ENCODE measurements at regions of chr4 and their contacts with region 1.

Region 1: DNA sequence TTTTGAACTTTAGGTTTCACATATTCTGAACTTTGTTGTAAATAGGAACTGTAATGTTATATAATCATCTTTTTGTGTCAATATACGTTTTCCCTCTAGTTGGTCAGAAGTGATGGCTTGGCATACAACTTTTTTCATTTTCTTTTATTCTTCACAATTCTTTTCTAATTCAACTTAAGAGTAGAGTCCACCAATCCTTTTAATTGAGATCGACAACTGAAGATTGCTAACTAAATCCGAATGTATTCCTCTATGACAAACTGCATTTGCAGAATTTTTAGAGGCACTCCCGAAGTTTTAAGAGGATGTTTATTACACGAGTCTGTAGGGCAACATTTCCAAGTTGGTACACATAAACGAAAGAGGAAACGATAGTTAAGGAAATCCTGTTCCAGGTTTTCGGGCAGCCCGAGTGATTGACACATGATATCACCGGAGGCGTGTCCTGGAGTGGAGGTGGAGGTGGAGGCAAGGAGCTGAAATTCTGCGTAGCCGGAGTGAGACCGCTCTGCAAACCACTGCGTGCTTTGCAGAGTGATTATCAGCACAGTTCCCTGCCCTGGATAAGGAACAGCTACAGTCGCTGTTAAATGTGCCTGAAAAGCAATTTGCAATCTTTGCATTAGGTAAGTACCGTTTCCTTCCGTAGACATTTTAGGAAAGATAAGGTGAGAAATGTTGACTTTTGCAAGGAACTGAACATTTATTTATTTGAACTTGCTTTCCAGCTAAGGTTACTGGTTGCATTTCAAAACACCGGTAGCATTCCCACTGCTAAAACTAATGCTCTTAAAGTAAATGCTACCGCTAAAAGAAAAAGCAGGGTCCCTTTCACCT is at the start of gene SPRY1:
- DNase-seq: peak; percentile 84 to 93 (median 92)
- ATAC-seq: peak; percentile 86 to 92 (median 90)
- H3K4me3 ChIP-seq: peak within 1 kb of the TSS; percentile 63 to 86 (median 73)
- H3K27ac ChIP-seq: peak within 1 kb of the TSS; percentile 85 to 97 (median 93)
- H3K4me1 ChIP-seq: peaks cover 0 to 29% (median 0%) of the 10 kb centered on the region in 12 donors
- H3K27me3 ChIP-seq: peaks cover 0 to 8% (median 0%) of the 10 kb centered on the region in 9 donors
- CTCF ChIP-seq: no peak
- POLR2A ChIP-seq: peak; percentile 41 to 96
- total RNA-seq, gene SPRY1: 28.0 to 104 (median 39.1) TPM

Region 2: GRCh38 chr4:123121241-123121907 is 275.2 kb before region 1 on chr4:
- intact Hi-C with region 1: loop called in 7 of 10 experiments (anchors 5 to 10 kb)
- DNase-seq: no peak
- ATAC-seq: no peak
- H3K4me3 ChIP-seq: no peak overlapping the region
- H3K27ac ChIP-seq: no peak overlapping the region
- H3K4me1 ChIP-seq: peaks cover 0 to 5% (median 0%) of the 10 kb centered on the region in 12 donors
- H3K27me3 ChIP-seq: no peaks in the 10 kb centered on the region
- CTCF ChIP-seq: no peak
- POLR2A ChIP-seq: no peak

Region 3: DNA sequence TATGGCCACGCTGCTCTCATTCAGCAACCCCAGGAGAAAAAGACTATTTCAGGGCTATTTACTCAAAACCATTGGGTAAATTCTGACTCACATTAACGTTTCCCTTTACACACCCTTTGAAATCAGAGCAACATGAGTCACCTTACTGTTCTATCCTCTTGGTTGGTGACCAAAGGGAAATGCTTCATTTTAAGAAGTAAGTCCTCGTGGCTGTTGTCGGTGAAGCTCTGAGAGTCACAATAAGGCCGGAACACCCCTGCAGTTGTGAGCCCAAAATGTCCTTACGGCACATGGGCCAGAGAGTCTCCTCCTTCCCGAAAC is 56.2 kb before region 1 on chr4:
- intact Hi-C with region 1: loop called in 1 of 10 experiments (anchors 5 kb)
- DNase-seq: peak in 2 of 5 donors; percentile 35 to 47
- ATAC-seq: peak; percentile 65 to 88 (median 87)
- H3K4me3 ChIP-seq: no peak overlapping the region
- H3K27ac ChIP-seq: peak overlapping the region; percentile 57 to 83 (median 77)
- H3K4me1 ChIP-seq: peaks cover 0 to 43% (median 13%) of the 10 kb centered on the region in 12 donors
- H3K27me3 ChIP-seq: no peaks in the 10 kb centered on the region
- CTCF ChIP-seq: no peak
- POLR2A ChIP-seq: peak in 1 of 2 donors; percentile 38

Region 4: DNA sequence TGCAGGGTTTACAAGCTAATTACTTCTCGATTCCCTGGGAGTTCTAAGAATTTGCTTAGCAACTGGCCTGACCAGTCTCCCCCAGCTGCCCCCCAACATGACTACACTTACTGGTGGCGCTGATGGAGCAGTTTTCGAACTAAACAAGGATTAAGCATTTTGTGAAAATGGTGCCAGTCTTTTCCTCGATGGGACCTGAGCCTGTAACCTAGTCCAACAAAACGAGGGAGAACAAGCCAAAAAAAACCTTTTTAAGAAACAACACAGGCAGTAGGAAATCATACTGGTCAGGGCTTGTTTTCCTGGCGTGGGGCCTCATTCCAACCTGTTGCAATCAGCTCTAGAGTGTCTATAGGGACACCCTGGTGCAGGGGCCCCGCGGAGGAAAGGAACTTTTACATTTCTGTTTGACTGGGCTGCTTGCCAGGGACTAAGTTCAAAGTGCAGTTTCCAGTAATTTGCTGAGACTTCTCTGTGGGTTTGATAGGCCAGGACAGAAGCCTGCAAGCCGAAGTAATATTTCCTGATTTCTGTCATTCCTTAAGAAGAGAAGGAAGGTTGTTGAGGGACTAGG is 158.8 kb after region 1 on chr4:
- intact Hi-C with region 1: loop called in 5 of 10 experiments (anchors 5 to 10 kb)
- DNase-seq: peak; percentile 74 to 89 (median 85)
- ATAC-seq: peak; percentile 79 to 95 (median 92)
- H3K4me3 ChIP-seq: peak overlapping the region in 3 of 12 donors; percentile 1 to 27 (median 5)
- H3K27ac ChIP-seq: peak overlapping the region; percentile 49 to 83 (median 70)
- H3K4me1 ChIP-seq: peaks cover 0 to 37% (median 17%) of the 10 kb centered on the region in 12 donors
- H3K27me3 ChIP-seq: no peaks in the 10 kb centered on the region
- CTCF ChIP-seq: no peak
- POLR2A ChIP-seq: no peak

Region 5: DNA sequence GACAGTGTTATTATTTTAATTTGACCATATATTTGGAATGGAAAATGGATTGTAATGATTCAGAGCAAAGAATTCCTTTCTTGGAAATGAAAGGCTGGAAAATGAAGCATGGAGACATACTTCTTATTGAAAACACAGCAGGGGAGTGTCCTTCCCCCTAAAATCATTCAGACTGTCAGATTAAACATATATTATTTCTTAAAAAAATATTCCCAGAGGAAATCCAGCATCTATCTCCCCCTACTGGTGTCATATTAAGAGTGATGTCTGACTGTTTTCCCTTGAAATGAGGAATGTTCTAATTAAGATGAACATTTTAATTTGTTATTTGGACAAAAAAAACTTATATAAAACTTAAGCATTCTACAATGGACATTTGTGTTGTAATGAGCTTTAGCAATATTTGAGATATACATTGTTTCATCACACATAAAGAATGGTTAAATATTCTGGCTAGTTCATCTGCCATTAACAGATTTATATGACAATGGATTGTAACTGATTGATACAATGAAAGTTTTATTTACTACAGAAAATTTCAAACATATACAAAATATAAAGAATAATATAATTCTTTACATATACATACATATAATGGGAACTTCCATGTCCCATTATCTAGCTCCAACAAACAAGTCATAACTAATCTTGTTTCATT is 264.7 kb after region 1 on chr4:
- intact Hi-C with region 1: loop called in 7 of 10 experiments (anchors 5 to 10 kb)
- DNase-seq: no peak
- ATAC-seq: no peak
- H3K4me3 ChIP-seq: no peak overlapping the region
- H3K27ac ChIP-seq: no peak overlapping the region
- H3K4me1 ChIP-seq: peaks cover 0 to 5% (median 0%) of the 10 kb centered on the region in 12 donors
- H3K27me3 ChIP-seq: no peaks in the 10 kb centered on the region
- CTCF ChIP-seq: peak; percentile 32 to 68 (median 50)
- POLR2A ChIP-seq: no peak

Region 6: DNA sequence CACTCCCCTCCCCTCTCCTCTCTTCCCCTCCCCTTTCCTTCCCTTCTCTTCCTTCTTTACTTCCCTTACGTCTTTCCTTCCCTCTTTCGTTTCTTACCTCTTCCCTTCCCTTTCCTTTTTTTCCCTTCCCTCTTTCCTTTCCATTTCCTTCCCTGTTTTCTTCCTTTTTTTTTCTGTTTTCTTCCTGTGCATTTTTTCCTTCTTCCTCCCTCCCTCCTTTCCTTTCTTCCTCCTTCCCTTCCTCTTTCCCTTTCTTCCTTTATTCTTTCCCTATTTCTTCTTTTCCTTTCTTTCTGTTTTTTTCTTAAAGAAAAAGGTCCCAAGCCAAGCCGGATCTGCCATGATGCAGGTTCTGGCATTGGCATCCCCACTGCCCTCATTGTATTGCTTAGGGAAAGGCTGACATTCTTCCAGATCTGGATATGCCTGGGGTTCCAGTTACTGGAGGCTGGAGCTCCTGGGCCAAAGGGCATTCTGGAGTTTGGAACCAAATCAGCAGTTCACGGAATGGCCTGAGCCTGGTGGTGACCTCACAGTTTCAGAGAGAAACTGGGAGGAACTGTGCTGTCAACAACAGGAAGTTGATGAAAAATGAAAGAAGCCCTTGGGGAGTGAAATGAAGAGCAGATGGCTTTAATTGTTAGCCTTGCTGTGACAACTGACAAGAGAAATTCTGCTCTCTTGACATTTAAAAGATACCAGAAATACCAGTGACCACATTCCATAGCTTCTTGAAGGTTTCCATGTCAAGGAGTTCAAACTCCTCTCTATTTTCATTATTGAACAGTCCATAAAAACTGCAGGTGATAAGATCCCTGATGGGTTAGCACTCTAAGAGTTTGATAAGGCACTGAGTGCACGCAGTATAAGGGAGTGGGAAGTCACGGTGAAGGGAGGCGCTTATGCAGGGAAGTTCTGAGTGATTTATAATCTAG is 622.1 kb after region 1 on chr4:
- intact Hi-C with region 1: loop called in 2 of 10 experiments (anchors 5 to 10 kb)
- DNase-seq: peak; percentile 53 to 74 (median 63)
- ATAC-seq: peak; percentile 79 to 94 (median 92)
- H3K4me3 ChIP-seq: no peak overlapping the region
- H3K27ac ChIP-seq: peak overlapping the region; percentile 18 to 78 (median 74)
- H3K4me1 ChIP-seq: peaks cover 0 to 21% (median 17%) of the 10 kb centered on the region in 12 donors
- H3K27me3 ChIP-seq: no peaks in the 10 kb centered on the region
- CTCF ChIP-seq: no peak
- POLR2A ChIP-seq: no peak

Region 7: DNA sequence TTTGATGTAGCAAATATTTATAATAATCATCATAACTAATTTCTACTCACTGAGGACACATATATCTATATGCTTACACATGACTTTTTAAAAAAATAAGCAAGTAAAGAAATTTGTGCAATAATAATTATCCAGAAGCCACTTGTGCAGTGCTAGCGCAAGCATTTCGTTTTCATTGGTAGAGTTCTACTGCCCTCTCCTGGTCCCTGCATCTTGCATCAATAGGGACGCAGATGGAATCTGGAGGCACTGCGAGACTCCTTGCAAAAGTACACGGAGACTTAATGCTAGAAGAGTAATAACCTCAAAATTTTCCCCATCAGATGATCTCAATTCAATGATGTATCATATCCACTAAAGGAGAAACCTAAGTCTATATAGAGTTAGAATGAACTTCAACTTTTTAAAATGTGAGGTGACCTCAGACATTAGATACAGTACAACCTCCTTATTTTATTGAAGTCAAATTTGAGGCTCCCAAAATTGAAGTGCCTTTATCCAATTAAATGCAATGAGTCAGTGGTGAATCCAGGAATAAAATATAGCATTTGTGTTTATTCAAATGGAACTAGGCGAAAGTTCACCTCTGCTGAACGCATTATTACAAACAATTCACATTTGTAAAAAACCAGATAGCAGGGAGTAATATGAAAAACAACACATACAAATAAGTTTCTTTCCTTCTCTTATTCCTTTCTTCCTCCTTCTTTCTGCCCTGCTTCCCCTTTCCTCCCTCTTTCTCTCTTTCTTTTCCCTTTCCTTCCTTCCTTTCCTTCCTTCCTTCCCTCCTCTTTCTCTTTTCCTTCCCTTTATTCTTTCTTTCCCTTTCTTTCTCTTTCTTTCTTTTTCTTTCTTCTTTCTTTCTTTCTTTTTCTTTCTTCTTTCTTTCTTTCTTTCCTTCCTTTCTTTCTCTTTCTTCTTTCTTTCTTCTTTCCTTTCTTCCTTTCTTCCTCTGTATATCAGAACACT is 866.0 kb after region 1 on chr4:
- intact Hi-C with region 1: loop called in 2 of 10 experiments (anchors 10 kb)
- DNase-seq: peak in 4 of 5 donors; percentile 36 to 58 (median 51)
- ATAC-seq: peak in 3 of 4 donors; percentile 82 to 96 (median 87)
- H3K4me3 ChIP-seq: no peak overlapping the region
- H3K27ac ChIP-seq: peak overlapping the region in 1 of 12 donors; percentile 19
- H3K4me1 ChIP-seq: peaks cover 0 to 6% (median 0%) of the 10 kb centered on the region in 12 donors
- H3K27me3 ChIP-seq: no peaks in the 10 kb centered on the region
- CTCF ChIP-seq: peak; percentile 69 to 95 (median 84)
- POLR2A ChIP-seq: no peak